ENCODE measurements at regions of chr7 and their contacts with region 1.

Region 1: GRCh38 chr7:121372376-121373010 is 23.6 kb downstream of the FAM3C start:
- DNase-seq: no peak
- H3K4me3 ChIP-seq: no peak overlapping the region
- H3K27ac ChIP-seq: no peak overlapping the region
- H3K4me1 ChIP-seq: peaks cover 0 to 13% (median 3%) of the 10 kb centered on the region in 4 donors
- H3K27me3 ChIP-seq: no peaks in the 10 kb centered on the region
- CTCF ChIP-seq: no peak

Region 2: GRCh38 chr7:121138262-121138933 is 234.1 kb before region 1 on chr7:
- intact Hi-C with region 1: loop called (anchors 10 kb)
- DNase-seq: no peak
- H3K4me3 ChIP-seq: no peak overlapping the region
- H3K27ac ChIP-seq: no peak overlapping the region
- H3K4me1 ChIP-seq: peaks cover 0 to 17% (median 0%) of the 10 kb centered on the region in 4 donors
- H3K27me3 ChIP-seq: no peaks in the 10 kb centered on the region
- CTCF ChIP-seq: no peak

Region 3: GRCh38 chr7:121575194-121575765 is 202.8 kb after region 1 on chr7:
- intact Hi-C with region 1: no loop called
- DNase-seq: no peak
- H3K4me3 ChIP-seq: no peak overlapping the region
- H3K27ac ChIP-seq: no peak overlapping the region
- H3K4me1 ChIP-seq: no peaks in the 10 kb centered on the region
- H3K27me3 ChIP-seq: no peaks in the 10 kb centered on the region
- CTCF ChIP-seq: no peak

Measured in tibial artery (tissue), 4 donors.